Heart left ventricle (tissue), 16 donors: ENCODE measurements at regions of chr3 and their contacts with region 1.

Region 1: DNA sequence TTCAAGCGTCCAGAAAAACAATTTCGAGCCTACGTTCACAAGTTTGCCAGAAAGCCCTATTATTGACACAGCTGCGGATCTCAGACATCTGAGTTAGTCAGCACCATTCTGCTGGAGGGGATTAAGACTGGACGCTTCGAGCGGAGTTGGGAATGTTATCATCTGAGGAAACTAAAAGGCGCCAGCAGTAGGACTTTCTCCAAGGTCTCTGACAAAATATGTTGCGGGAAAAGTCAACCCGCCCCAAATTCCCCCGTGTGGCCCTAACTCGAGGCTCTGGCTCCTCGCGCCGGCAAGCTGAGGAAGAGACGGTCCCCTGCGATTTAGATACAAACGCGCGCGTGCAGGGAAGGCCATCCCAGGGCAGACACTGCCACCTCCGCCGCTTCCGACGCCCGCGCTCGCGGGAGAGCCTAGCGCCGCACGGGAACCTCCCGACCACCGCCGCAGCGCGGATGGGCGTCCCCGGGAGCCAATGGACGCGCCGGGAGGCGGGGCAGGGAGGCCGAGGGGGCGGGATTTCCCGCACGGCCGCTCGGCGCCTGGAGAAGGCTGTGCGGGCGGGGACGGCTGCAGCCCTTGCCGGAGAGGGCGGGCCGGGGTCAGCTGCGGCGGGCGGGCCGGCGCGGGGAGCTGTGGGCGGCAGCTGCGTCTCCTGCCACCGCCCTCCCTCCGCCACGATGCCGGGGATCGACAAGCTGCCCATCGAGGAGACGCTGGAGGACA is at the start of gene APPL1:
- DNase-seq: peak; percentile 94 to 98 (median 95)
- ATAC-seq: peak; percentile 95 to 99 (median 98)
- H3K4me3 ChIP-seq: peak within 1 kb of the TSS; percentile 57 to 97 (median 84)
- H3K27ac ChIP-seq: peak within 1 kb of the TSS; percentile 91 to 98 (median 94)
- H3K4me1 ChIP-seq: peaks cover 4 to 41% (median 25%) of the 10 kb centered on the region in 12 donors
- H3K27me3 ChIP-seq: no peaks in the 10 kb centered on the region
- CTCF ChIP-seq: no peak
- POLR2A ChIP-seq: peak; percentile 57 to 96
- total RNA-seq, gene APPL1: 38.1 to 60.9 (median 46.8) TPM

Region 2: DNA sequence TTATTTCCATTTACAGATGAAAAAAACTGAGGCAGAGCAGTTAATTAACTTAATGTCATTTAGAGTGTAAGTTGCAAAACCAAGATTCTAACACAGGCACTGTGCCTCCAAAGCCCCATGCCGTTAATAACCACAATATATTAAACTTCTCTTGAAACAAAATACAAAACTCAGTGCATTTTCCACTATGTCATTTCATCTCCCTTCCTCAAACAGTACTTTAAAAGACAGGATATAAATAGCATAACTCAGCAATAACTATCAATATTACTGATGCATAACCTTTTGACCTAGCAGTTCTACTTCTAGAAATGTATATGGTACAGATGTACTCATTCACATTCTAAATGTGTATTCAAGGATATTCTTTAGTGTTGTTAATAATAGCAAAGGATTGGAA is 539.2 kb before region 1 on chr3:
- intact Hi-C with region 1: loop called in 1 of 10 experiments (anchors 5 kb)
- DNase-seq: no peak
- ATAC-seq: no peak
- H3K4me3 ChIP-seq: no peak overlapping the region
- H3K27ac ChIP-seq: no peak overlapping the region
- H3K4me1 ChIP-seq: peaks cover 0 to 14% (median 0%) of the 10 kb centered on the region in 12 donors
- H3K27me3 ChIP-seq: no peaks in the 10 kb centered on the region
- CTCF ChIP-seq: no peak
- POLR2A ChIP-seq: no peak

Region 3: DNA sequence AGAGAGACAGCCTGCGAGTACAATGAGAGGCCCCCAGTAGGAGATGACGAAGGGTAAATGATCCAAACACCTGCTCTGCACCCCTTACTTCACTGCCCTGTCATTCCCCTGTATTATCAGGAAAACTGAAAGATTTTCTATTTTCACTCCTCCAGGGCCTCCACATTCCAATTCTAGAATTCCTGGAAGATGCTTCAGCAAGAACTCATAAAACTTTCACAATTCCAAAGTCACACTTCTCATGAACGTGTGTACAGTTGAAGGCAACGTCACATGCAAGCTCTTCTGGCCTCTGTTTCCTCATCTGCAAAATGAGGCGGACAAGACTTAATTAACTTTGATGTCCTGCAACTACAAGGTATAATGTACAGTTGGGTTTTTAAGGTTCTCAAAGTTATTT is 229.7 kb before region 1 on chr3:
- intact Hi-C with region 1: loop called in 6 of 10 experiments (anchors 5 to 10 kb)
- DNase-seq: no peak
- ATAC-seq: no peak
- H3K4me3 ChIP-seq: no peak overlapping the region
- H3K27ac ChIP-seq: peak overlapping the region in 1 of 12 donors; percentile 76
- H3K4me1 ChIP-seq: peaks cover 0 to 22% (median 1%) of the 10 kb centered on the region in 12 donors
- H3K27me3 ChIP-seq: no peaks in the 10 kb centered on the region
- CTCF ChIP-seq: no peak
- POLR2A ChIP-seq: no peak

Region 4: DNA sequence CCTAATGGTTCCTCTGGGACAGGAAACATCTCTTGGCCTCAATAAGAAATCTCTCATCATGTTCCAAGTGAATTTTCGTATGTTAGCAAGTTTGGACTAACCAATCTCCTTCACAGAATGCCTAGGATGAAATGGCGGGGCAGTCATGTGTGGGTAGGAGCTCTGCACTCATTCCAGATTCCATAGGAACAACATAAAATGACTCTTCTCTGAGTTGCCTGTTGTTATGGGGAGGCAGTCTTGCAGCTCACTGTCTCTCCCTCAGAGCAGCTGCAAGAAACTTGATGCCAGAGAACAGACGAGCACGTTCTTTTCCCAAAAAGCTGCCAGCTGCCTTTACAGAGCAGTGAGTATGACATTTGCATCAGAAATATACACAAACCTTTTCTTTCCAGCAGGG is 132.8 kb before region 1 on chr3:
- intact Hi-C with region 1: loop called in 3 of 10 experiments (anchors 5 to 10 kb)
- DNase-seq: no peak
- ATAC-seq: peak in 1 of 4 donors; percentile 16
- H3K4me3 ChIP-seq: peak overlapping the region in 1 of 12 donors; percentile 24
- H3K27ac ChIP-seq: peak overlapping the region in 6 of 12 donors; percentile 1 to 45 (median 30)
- H3K4me1 ChIP-seq: peaks cover 0 to 10% (median 0%) of the 10 kb centered on the region in 12 donors
- H3K27me3 ChIP-seq: no peaks in the 10 kb centered on the region
- CTCF ChIP-seq: no peak
- POLR2A ChIP-seq: no peak

Region 5: GRCh38 chr3:57100046-57100695 is 127.2 kb before region 1 on chr3:
- intact Hi-C with region 1: loop called in 8 of 10 experiments (anchors 1 to 10 kb)
- DNase-seq: peak in 4 of 5 donors; percentile 48 to 62 (median 52)
- ATAC-seq: peak in 3 of 4 donors; percentile 81 to 83 (median 82)
- H3K4me3 ChIP-seq: no peak overlapping the region
- H3K27ac ChIP-seq: peak overlapping the region in 1 of 12 donors; percentile 31
- H3K4me1 ChIP-seq: peaks cover 0 to 4% (median 0%) of the 10 kb centered on the region in 12 donors
- H3K27me3 ChIP-seq: no peaks in the 10 kb centered on the region
- CTCF ChIP-seq: peak; percentile 88 to 96 (median 92)
- POLR2A ChIP-seq: no peak

Region 6: GRCh38 chr3:57169872-57170623 is 57.3 kb before region 1 on chr3:
- intact Hi-C with region 1: loop called in 8 of 10 experiments (anchors 2 to 10 kb)
- DNase-seq: peak; percentile 74 to 88 (median 79)
- ATAC-seq: peak; percentile 62 to 89 (median 80)
- H3K4me3 ChIP-seq: peak overlapping the region; percentile 1 to 64 (median 55)
- H3K27ac ChIP-seq: peak overlapping the region in 5 of 12 donors; percentile 18 to 55 (median 31)
- H3K4me1 ChIP-seq: peaks cover 0 to 17% (median 5%) of the 10 kb centered on the region in 12 donors
- H3K27me3 ChIP-seq: peaks cover 0 to 10% (median 0%) of the 10 kb centered on the region in 9 donors
- CTCF ChIP-seq: peak; percentile 78 to 94 (median 85)
- POLR2A ChIP-seq: no peak

Region 7: GRCh38 chr3:57192028-57192427 is 35.3 kb before region 1 on chr3:
- intact Hi-C with region 1: no loop called
- DNase-seq: no peak
- ATAC-seq: no peak
- H3K4me3 ChIP-seq: no peak overlapping the region
- H3K27ac ChIP-seq: no peak overlapping the region
- H3K4me1 ChIP-seq: no peaks in the 10 kb centered on the region
- H3K27me3 ChIP-seq: no peaks in the 10 kb centered on the region
- CTCF ChIP-seq: no peak
- POLR2A ChIP-seq: no peak

Region 8: DNA sequence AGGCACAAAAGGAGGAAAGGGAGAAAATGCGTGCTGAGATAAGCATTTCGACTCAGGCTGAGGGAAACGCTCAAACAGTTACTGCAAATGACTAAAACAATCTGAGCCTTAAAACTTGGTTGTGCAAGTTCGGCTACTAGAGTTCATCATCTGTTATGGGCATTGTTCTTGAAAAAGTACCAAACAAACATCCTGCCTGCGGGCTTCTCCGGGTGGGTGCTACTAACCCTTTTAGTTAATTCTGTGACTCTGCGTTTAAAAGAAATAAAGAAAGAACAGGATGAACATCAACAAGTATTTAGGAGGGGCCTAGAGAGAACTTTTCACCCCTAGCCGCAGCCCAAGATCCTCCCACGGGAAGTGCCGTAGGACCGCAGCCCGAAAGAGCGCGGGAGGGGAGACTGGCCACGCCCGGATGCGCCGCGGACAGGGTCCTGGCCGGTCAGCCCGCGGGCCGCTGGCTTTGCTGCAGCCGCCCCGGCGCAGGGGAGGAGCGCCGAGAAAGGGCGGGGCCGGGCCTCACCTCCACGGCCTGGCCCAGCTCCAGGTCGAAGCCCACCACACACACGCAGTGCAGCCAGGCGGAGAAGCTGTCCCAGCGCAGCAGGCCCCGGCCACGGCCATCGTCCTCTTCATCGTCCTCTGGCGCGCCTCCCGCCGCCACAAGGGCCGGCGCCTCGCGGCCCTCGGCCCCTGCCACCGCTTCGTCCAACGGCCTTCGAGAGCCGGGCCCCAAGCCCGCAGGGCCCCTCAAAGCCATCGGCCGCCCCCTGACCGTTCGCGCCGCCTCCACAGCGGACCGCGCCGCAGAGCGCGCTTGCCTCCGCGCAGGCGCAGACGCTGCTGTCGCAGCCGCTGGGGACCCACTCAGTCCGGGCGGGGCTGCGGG is 465.1 kb after region 1 on chr3 and contains the start of gene DENND6A:
- intact Hi-C with region 1: loop called in 1 of 10 experiments (anchors 10 kb)
- DNase-seq: peak; percentile 88 to 99 (median 91)
- ATAC-seq: peak; percentile 91 to 97 (median 96)
- H3K4me3 ChIP-seq: peak within 1 kb of the TSS; percentile 50 to 97 (median 87)
- H3K27ac ChIP-seq: peak within 1 kb of the TSS; percentile 85 to 100 (median 99)
- H3K4me1 ChIP-seq: peaks cover 0 to 53% (median 33%) of the 10 kb centered on the region in 12 donors
- H3K27me3 ChIP-seq: no peaks in the 10 kb centered on the region
- CTCF ChIP-seq: peak in 2 of 12 donors; percentile 6 to 19
- POLR2A ChIP-seq: peak; percentile 70 to 95
- total RNA-seq, gene DENND6A: 12.3 to 27.9 (median 18.6) TPM

Region 9: GRCh38 chr3:57961828-57962447 is 734.6 kb after region 1 on chr3:
- intact Hi-C with region 1: no loop called
- DNase-seq: no peak
- ATAC-seq: no peak
- H3K4me3 ChIP-seq: no peak overlapping the region
- H3K27ac ChIP-seq: no peak overlapping the region
- H3K4me1 ChIP-seq: peaks cover 0 to 34% (median 22%) of the 10 kb centered on the region in 12 donors
- H3K27me3 ChIP-seq: no peaks in the 10 kb centered on the region
- CTCF ChIP-seq: peak in 6 of 12 donors; percentile 15 to 39 (median 30)
- POLR2A ChIP-seq: no peak